RWPE1 (cell line): ENCODE measurements at regions of chr11 and their contacts with region 1.

Region 1: DNA sequence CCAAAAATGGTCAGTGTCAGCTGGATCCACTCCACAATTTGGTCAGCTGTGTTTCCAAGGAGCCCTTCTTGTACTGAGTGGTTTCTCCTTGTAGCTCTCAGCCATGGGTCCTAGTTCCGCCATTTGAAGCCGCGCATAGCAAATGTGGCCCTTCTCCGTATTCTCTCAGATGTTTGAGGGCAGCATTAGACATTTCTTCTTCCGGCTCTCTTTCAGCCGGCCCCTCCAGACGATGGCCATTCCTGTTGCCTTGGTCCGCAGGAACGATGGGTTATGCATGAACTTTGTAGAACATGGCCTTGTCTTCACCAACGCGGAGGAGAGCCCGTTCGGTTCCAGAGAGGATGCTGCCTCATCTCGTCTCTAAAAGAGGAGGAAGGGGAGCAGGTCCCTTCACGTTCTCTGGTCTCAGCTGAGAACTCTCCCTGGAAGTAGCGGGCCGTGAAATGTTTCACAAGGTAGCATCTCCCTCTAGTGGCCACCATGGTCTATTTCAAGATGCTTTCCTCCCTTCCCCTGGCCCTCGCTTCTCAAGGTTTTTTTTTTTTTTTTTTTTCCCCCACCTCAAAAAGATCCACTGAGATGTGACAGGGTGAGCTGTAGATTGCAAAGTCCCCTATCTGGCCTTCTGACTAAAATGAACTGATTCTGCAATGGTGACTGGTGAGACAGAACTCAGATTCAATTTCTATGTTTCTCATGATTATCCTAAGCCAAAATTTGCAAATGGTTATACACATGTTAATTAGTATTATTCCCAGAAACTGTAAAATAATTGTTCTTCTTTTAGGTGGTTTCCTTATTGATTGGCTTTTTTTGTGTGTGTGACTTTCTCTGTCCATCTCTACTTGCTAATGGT is 19.8 kb upstream of the PLET1 start:
- DNase-seq: peak; percentile 82
- H3K27ac ChIP-seq: peak overlapping the region; percentile 30
- CTCF ChIP-seq: peak; percentile 47

Region 2: DNA sequence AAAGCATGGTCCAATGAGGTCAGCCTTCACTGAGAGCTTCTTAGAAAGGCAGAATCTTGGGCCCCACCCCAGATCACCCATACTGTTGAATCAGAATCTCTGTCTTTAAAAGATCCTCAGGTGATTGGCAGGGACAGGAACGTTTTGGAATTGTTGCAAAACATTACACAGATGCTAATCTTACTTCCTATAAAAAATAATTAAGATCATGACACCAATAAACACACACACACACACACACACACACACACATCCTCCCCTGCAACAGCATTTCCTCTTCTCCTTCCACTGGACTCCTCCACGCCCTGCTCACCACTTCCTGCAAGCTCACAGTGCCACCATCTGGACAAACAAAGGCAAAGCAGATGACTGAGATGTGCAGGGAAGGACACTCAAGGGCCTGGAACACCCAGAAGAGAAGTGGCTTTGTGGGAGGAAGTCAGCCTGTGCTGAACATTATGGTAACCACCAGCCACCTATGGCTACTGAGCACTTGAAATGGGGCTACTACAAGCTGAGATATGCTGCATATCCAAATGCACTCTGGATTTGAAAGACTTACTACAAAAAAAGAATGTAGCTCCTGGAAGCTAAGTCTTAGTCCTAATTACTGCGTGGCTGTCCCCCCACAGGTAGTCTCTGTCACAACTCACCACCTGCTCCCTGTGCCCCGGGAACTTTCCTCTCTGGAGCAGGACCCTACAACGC is 833.9 kb before region 1 on chr11:
- CTCF ChIA-PET with region 1: no interaction called
- POLR2A ChIA-PET with region 1: no interaction called
- DNase-seq: peak; percentile 88
- H3K27ac ChIP-seq: no peak overlapping the region
- CTCF ChIP-seq: peak; percentile 85

Region 3: GRCh38 chr11:112113539-112114457 is 166.7 kb before region 1 on chr11:
- CTCF ChIA-PET with region 1: interaction called, 13 read pairs
- POLR2A ChIA-PET with region 1: no interaction called
- DNase-seq: peak; percentile 48
- H3K27ac ChIP-seq: no peak overlapping the region
- CTCF ChIP-seq: peak; percentile 45

Region 4: DNA sequence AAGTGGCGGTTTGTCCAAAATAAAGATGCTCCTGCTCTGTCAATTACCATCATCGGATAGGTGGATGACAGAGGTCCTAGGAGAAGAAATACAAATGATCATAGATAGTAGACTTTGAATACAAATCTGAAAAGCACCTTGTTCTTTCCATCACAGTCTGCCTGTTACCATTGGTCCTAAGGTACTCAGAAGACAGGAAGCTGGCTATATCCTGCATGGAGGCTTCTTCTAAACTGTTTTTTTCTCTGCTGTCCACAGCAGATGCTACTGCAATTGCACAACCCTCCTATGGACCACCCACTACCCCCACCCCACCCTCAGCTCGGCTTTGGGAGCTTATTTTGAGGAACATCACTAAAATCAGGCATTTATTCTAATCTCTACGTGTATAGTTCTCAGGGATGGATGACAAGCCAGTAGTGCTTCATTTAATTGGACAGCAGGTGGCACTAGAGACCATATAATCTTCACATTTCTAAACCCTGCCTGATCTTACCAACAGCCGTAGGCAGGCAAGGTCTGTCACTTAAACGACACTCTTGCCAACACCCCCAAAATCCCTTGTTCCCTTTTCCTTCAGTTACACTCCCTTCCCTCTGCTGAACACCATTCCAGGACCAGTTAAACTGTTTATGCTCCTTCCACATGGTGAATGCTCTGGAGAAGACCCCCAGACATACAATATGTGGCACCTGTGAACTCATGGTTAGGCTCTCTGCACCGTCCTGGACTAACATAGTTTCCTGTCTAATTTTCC is 60.8 kb before region 1 on chr11:
- CTCF ChIA-PET with region 1: interaction called, 32 read pairs
- POLR2A ChIA-PET with region 1: interaction called, 9 read pairs
- DNase-seq: peak; percentile 62
- H3K27ac ChIP-seq: no peak overlapping the region
- CTCF ChIP-seq: peak; percentile 77

Region 5: GRCh38 chr11:112229746-112230433 is 50.6 kb before region 1 on chr11:
- CTCF ChIA-PET with region 1: interaction called, 18 read pairs
- POLR2A ChIA-PET with region 1: no interaction called
- DNase-seq: no peak
- H3K27ac ChIP-seq: no peak overlapping the region
- CTCF ChIP-seq: no peak